Aorta (tissue), 5 donors: ENCODE measurements at regions of chr17 and their contacts with region 1.

Region 1: DNA sequence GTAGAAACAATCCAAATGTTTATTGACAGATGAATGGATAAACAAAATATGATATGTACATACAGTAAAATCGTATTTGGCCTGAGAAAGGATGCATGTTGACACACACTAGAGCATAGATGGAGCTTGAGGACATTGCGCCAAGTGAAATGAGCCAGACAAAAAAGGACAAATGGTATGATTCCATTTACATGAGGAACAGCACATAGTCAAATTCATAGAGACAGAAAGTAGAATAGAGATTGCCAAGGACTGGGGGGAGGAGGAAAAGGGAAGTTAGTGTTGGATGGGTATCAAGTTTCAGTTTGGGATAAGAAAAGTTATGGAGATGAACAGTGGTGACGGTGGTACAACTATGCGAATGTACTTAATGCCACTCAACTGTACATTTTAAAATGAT is 47.9 kb downstream of the COPRS start:
- DNase-seq: no peak
- ATAC-seq: no peak
- H3K4me3 ChIP-seq: no peak overlapping the region
- H3K27ac ChIP-seq: no peak overlapping the region
- H3K4me1 ChIP-seq: peaks cover 0 to 2% of the 10 kb centered on the region in 2 donors
- H3K27me3 ChIP-seq: no peaks in the 10 kb centered on the region

Region 2: GRCh38 chr17:31740611-31741082 is 70.5 kb before region 1 on chr17:
- intact Hi-C with region 1: loop called in 1 of 2 experiments (anchors 5 kb)
- DNase-seq: no peak
- ATAC-seq: no peak
- H3K4me3 ChIP-seq: no peak overlapping the region
- H3K27ac ChIP-seq: peak overlapping the region in 1 of 2 donors; percentile 58
- H3K4me1 ChIP-seq: peaks cover 2 to 8% of the 10 kb centered on the region in 2 donors
- H3K27me3 ChIP-seq: no peaks in the 10 kb centered on the region

Region 3: GRCh38 chr17:31787857-31788570 is 23.1 kb before region 1 on chr17:
- intact Hi-C with region 1: loop called in 1 of 2 experiments (anchors 1 kb)
- DNase-seq: peak; percentile 79 to 86
- ATAC-seq: peak; percentile 79
- H3K4me3 ChIP-seq: no peak overlapping the region
- H3K27ac ChIP-seq: peak overlapping the region; percentile 40 to 89
- H3K4me1 ChIP-seq: no peaks in the 10 kb centered on the region
- H3K27me3 ChIP-seq: no peaks in the 10 kb centered on the region